Astrocyte of the cerebellum (primary cell): ENCODE measurements at regions of chr2 and their contacts with region 1.

Region 1: DNA sequence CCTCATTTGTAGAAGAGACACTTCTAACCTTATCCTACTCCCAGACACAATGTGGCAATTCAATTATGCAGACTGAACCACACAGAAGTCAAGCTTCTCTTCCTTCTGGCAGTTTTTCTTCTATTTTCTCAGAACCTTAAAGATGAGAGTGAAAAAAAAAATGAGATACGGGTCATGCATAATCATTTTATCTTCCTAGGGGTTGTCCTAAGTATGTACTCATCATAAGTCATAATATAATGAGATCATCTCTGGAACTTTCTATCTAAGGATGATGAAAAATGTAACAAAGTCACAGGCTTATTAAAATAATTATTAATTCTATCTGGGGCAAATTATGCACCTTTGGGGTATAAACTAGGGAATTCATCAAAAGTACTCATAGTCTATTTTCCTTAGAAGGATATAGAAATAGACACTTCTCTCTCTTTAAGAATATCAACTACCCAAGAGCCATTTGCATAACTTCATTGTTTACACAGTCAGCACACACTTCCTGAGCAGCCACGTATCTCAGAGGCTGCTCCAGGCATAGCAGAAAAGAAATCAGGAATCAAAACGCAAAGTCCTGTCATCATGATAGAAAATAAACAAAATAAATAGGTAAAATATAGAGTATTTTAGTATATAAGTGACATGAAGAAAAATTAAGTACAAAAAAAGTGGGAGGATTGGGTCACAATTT is 345.9 kb upstream of the SPHKAP start:
- DNase-seq: no peak
- H3K4me3 ChIP-seq: no peak overlapping the region
- CTCF ChIP-seq: no peak

Region 2: GRCh38 chr2:228575897-228576296 is 48.6 kb after region 1 on chr2:
- in situ Hi-C with region 1: loop called (anchors 5 kb)
- DNase-seq: no peak
- H3K4me3 ChIP-seq: no peak overlapping the region
- CTCF ChIP-seq: no peak